Posterior vena cava (tissue), 2 donors: ENCODE measurements at regions of chr11 and their contacts with region 1.

Region 1: GRCh38 chr11:112143597-112143996 is 20.3 kb downstream of the IL18 start:
- DNase-seq: no peak

Region 2: GRCh38 chr11:110939471-110939870 is 1204.1 kb before region 1 on chr11:
- intact Hi-C with region 1: loop called in 1 of 2 experiments (anchors 5 kb)
- DNase-seq: no peak

Region 3: DNA sequence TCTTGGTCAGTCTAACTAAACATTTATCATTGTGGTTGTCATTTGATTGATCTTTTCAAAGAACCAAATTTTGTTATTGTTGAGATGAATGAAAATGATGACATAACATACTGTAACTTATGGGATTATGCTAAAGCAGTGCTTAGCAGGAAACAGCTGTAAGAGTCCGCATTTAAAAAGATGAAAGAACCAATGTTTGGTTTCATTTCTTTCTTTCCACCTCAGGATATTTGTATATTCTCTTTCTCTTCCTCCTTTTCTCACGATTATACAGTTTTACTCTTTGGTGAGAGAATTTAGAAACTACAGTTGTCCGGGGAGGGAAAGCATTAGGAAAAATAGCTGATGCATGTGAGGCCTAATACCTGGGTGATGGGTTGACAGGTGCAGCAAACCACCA is 92.9 kb before region 1 on chr11:
- intact Hi-C with region 1: no loop called
- DNase-seq: no peak

Region 4: GRCh38 chr11:112302231-112302732 is 158.7 kb after region 1 on chr11:
- intact Hi-C with region 1: no loop called
- DNase-seq: no peak